GM10248 (cell line): ENCODE measurements at regions of chr7 and their contacts with region 1.

Region 1: GRCh38 chr7:137656227-137656849 is 190.4 kb downstream of the DGKI start:
- DNase-seq: peak; percentile 70
- CTCF ChIP-seq: peak; percentile 83

Region 2: DNA sequence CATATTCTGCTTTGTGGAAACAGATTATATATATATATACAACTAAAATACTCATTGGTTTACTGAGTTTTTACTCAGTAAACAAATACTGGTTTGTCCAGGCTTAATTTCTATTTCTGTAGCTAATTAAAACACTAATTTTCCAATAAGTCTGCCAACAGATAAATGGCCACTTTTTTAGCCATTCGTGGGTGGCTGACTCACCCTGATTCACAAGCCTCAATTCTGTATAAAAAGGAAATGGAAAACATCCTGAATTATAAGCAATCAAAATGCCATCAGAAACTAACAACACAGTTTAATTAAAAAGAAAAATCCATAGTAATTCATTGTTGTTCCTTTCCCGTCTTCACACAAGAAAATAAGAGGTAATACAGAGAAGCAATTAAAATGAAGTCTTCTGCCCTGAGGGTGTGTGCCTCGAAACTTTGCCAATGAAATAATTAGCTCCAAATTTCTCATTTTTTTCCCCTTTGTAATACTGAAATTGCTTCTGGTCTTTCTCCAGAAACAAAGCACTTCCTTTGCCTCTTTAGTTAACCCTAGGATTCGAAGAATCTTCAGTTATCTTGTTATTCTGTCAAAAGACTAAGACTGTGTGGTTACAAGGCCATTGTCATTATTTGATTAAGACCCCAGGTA is 194.1 kb before region 1 on chr7:
- CTCF ChIA-PET with region 1: no interaction called
- POLR2A ChIA-PET with region 1: no interaction called
- DNase-seq: no peak
- CTCF ChIP-seq: no peak

Region 3: GRCh38 chr7:137642472-137642871 is 13.9 kb before region 1 on chr7:
- CTCF ChIA-PET with region 1: interaction called, 64 read pairs
- POLR2A ChIA-PET with region 1: no interaction called
- DNase-seq: no peak
- CTCF ChIP-seq: no peak

Region 4: GRCh38 chr7:137681657-137682562 is 25.6 kb after region 1 on chr7:
- CTCF ChIA-PET with region 1: interaction called, 16 read pairs
- POLR2A ChIA-PET with region 1: no interaction called
- DNase-seq: no peak
- CTCF ChIP-seq: no peak

Region 5: GRCh38 chr7:137890449-137890921 is 234.1 kb after region 1 on chr7:
- CTCF ChIA-PET with region 1: interaction called, 32 read pairs
- POLR2A ChIA-PET with region 1: no interaction called
- DNase-seq: no peak
- CTCF ChIP-seq: no peak